SK-N-SH (cell line): ENCODE measurements at regions of chr10 and their contacts with region 1.

Region 1: GRCh38 chr10:42690449-42691360 is 52.3 kb upstream of the ZNF33B start:
- DNase-seq: peak; percentile 71
- H3K4me3 ChIP-seq: peak overlapping the region; percentile 75 to 83
- H3K27ac ChIP-seq: peak overlapping the region in 1 of 2 experiments; percentile 73; a peak in 2 of 4 replicates
- H3K4me1 ChIP-seq: peaks cover 5 to 6% of the 10 kb centered on the region in 2 experiments; a peak in 2 of 4 replicates
- H3K27me3 ChIP-seq: no peaks in the 10 kb centered on the region
- CTCF ChIP-seq: peak; percentile 54
- EP300 ChIP-seq: no peak
- RAD21 ChIP-seq: peak; percentile 68

Region 2: GRCh38 chr10:42782446-42783180 is 91.9 kb after region 1 on chr10 and contains the start of gene BMS1:
- CTCF ChIA-PET with region 1: interaction called, 4 read pairs
- POLR2A ChIA-PET with region 1: interaction called, 10 read pairs
- DNase-seq: peak; percentile 93
- H3K4me3 ChIP-seq: peak within 1 kb of the TSS; percentile 84 to 93
- H3K27ac ChIP-seq: peak within 1 kb of the TSS; percentile 86 to 87
- H3K4me1 ChIP-seq: peaks cover 5 to 10% of the 10 kb centered on the region in 2 experiments; a peak in 3 of 4 replicates
- H3K27me3 ChIP-seq: no peaks in the 10 kb centered on the region; the same call in 1 of the 2 replicates
- CTCF ChIP-seq: no peak
- EP300 ChIP-seq: no peak; a peak in 1 of 4 replicates
- RAD21 ChIP-seq: no peak
- polyA plus RNA-seq, gene BMS1: 4.9 and 5.3 TPM in 2 replicates

Region 3: DNA sequence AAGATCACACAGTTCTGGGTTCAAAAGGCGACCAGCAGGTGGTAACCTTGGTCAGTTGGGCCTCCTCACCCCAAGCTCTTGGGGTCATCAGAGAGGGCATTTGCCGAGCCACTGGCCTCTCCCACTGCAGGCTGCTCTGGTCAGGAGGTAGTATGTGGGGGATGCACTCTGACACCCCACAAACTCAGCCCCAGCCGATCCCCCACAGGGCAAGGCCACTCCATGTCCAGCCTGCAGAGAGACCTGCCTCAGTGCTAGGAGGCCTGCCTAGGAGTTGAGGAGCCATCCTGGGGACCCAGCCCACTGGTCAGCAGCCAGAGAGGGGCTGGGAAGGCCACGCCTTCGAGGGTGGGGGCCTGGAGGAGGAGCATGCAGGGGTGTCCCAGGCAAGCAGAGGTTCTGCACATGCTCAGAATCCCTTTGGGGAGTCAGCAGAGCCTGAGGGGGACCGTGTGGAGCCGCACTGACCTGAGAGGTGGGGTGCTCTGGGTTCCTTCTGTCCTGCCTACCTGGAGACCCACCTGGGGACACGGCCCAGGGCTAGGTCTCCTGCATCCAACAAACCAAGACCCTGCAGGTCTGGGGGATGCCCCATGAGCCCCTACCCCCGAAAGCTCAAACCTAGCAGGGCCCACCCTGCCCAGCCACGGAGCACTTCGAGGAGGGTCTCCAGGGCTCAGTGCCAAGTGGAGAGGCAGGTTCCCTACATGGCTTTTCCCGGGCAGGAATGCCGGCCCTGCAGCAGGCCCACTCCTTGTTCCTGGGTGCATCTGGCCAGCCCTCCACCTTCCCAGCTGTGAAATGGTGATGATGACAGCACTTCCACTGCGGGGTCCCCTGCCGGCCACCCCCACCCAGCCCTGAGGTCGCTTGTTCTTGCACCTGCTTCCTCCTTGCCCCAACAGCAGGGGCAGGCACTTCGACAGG is 517.7 kb after region 1 on chr10:
- CTCF ChIA-PET with region 1: no interaction called
- POLR2A ChIA-PET with region 1: no interaction called
- DNase-seq: peak; percentile 12
- H3K4me3 ChIP-seq: no peak overlapping the region
- H3K27ac ChIP-seq: no peak overlapping the region
- H3K4me1 ChIP-seq: peaks cover 0 to 4% of the 10 kb centered on the region in 2 experiments; a peak in 1 of 4 replicates
- H3K27me3 ChIP-seq: no peaks in the 10 kb centered on the region
- CTCF ChIP-seq: no peak
- EP300 ChIP-seq: no peak
- RAD21 ChIP-seq: no peak